Activated naive CD4-positive, alpha-beta T cell treated with anti-CD3 and anti-CD28 coated beads, Interleukin-2, amount 10 ng/mL, durations not matched to agents 7 days and 5 days (primary cell): ENCODE measurements at regions of chr10 and their contacts with region 1.

Region 1: GRCh38 chr10:102225646-102226541 is at the start of gene ELOVL3:
- DNase-seq: peak; percentile 93
- H3K4me3 Mint-ChIP-seq: peak within 1 kb of the TSS; percentile 38
- H3K27ac Mint-ChIP-seq: no peak within 1 kb of the TSS
- H3K4me1 Mint-ChIP-seq: peaks cover 25% of the 10 kb centered on the region
- H3K27me3 Mint-ChIP-seq: peaks cover 72% of the 10 kb centered on the region

Region 2: GRCh38 chr10:102167861-102168260 is 58.0 kb before region 1 on chr10:
- CTCF ChIA-PET with region 1: interaction called, 125 read pairs
- DNase-seq: no peak
- H3K4me3 Mint-ChIP-seq: no peak overlapping the region
- H3K27ac Mint-ChIP-seq: no peak overlapping the region
- H3K4me1 Mint-ChIP-seq: peaks cover 26% of the 10 kb centered on the region
- H3K27me3 Mint-ChIP-seq: peaks cover 4% of the 10 kb centered on the region

Region 3: GRCh38 chr10:102245101-102245931 is 19.4 kb after region 1 on chr10 and contains the start of gene GBF1:
- CTCF ChIA-PET with region 1: interaction called, 24 read pairs
- DNase-seq: peak; percentile 94
- H3K4me3 Mint-ChIP-seq: peak within 1 kb of the TSS; percentile 99
- H3K27ac Mint-ChIP-seq: peak within 1 kb of the TSS; percentile 92
- H3K4me1 Mint-ChIP-seq: peaks cover 55% of the 10 kb centered on the region
- H3K27me3 Mint-ChIP-seq: peaks cover 27% of the 10 kb centered on the region

Region 4: DNA sequence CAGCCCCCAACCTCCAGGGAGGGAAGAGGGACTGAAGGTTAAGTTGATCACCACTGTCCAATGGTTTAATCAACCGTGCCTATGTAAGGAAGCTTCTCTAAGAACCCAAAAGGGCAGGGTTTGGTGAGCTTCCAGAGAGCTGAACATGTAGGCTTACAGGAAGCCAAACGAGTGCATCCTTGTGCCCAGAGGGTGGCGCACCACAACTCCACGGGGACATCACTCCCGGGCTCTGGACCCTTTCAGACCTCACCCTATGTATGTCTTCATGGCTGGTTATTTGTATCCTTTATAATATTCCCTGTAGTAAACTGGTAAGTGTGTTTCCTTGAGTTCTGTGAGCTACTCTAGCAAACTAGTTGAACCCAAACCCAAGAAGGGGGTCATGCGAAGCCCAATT is 158.2 kb after region 1 on chr10:
- CTCF ChIA-PET with region 1: interaction called, 15 read pairs
- DNase-seq: no peak
- H3K4me3 Mint-ChIP-seq: no peak overlapping the region
- H3K27ac Mint-ChIP-seq: no peak overlapping the region
- H3K4me1 Mint-ChIP-seq: no peaks in the 10 kb centered on the region
- H3K27me3 Mint-ChIP-seq: peaks cover 4% of the 10 kb centered on the region

Region 5: GRCh38 chr10:102420810-102421644 is 195.1 kb after region 1 on chr10 and contains the start of gene FBXL15:
- CTCF ChIA-PET with region 1: interaction called, 35 read pairs
- DNase-seq: peak; percentile 97
- H3K4me3 Mint-ChIP-seq: peak within 1 kb of the TSS; percentile 96
- H3K27ac Mint-ChIP-seq: peak within 1 kb of the TSS; percentile 96
- H3K4me1 Mint-ChIP-seq: peaks cover 40% of the 10 kb centered on the region
- H3K27me3 Mint-ChIP-seq: peaks cover 48% of the 10 kb centered on the region

Region 6: GRCh38 chr10:102583435-102584417 is 357.8 kb after region 1 on chr10:
- CTCF ChIA-PET with region 1: interaction called, 22 read pairs
- DNase-seq: peak; percentile 90
- H3K4me3 Mint-ChIP-seq: no peak overlapping the region
- H3K27ac Mint-ChIP-seq: no peak overlapping the region
- H3K4me1 Mint-ChIP-seq: peaks cover 12% of the 10 kb centered on the region
- H3K27me3 Mint-ChIP-seq: no peaks in the 10 kb centered on the region

Region 7: DNA sequence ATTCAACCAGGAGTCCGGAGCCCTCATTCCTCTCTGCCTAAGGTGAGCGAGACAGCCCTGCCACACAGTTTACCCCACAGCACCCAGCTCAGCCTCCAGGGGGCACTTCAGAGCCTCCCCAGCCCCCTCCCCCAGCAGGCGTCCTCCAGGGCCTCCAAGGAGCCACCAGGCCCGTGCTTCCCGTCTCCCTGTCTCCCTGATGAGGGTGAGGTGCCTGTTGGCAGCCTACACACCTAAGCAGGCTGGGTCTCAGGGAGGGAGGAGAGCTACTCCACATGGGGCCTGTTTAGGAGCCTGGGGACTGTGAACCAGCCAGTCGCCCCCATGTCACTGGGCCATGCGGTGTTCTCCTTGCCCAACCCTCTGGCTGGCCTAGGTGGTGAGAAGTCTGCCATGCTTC is 389.5 kb after region 1 on chr10:
- CTCF ChIA-PET with region 1: no interaction called
- DNase-seq: peak; percentile 38
- H3K4me3 Mint-ChIP-seq: no peak overlapping the region
- H3K27ac Mint-ChIP-seq: no peak overlapping the region
- H3K4me1 Mint-ChIP-seq: peaks cover 32% of the 10 kb centered on the region
- H3K27me3 Mint-ChIP-seq: no peaks in the 10 kb centered on the region